BJ (cell line): ENCODE measurements at regions of chr7 and their contacts with region 1.

Region 1: DNA sequence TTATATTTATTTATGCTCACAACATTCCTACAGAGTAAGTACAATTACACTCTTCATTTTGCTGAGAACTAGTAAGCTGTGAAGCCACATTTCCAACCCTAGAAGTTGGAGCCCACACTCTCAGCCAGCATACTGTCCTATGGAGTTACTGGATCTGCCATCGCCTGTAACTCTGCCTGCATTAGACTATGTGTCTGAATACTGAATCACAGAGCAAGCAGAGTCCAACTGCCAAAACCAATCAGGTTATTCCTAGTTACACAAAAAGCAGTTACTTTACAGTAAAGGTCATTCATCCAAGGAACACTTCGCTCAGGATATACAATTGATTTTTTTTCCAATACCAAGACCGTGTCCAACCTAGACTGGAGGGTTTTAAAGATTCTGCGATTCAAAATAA is 21.5 kb downstream of the CTAGE6 start:
- DNase-seq: no peak
- H3K4me3 ChIP-seq: no peak overlapping the region
- H3K27me3 ChIP-seq: no peaks in the 10 kb centered on the region
- CTCF ChIP-seq: no peak

Region 2: DNA sequence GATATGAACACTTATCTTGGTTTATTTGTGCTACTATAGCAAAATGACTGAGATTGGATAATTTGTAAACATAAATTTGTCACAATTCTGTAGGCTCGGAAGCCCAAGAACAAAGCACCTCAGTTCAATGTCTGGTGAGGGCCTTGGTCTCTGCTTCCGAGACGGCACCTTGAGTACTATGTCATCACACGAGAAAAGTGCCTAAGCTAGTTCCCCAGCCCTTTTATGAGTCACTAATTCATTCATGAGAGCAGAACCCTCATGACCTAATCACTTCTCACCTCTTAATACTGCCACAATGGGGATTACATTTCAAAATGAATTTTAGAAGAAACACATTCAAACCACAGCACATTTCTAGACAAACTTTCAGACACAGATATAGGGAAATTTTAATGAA is 1038.7 kb before region 1 on chr7:
- CTCF ChIA-PET with region 1: no interaction called
- POLR2A ChIA-PET with region 1: no interaction called
- DNase-seq: no peak
- H3K4me3 ChIP-seq: no peak overlapping the region
- H3K27me3 ChIP-seq: no peaks in the 10 kb centered on the region
- CTCF ChIP-seq: no peak

Region 3: DNA sequence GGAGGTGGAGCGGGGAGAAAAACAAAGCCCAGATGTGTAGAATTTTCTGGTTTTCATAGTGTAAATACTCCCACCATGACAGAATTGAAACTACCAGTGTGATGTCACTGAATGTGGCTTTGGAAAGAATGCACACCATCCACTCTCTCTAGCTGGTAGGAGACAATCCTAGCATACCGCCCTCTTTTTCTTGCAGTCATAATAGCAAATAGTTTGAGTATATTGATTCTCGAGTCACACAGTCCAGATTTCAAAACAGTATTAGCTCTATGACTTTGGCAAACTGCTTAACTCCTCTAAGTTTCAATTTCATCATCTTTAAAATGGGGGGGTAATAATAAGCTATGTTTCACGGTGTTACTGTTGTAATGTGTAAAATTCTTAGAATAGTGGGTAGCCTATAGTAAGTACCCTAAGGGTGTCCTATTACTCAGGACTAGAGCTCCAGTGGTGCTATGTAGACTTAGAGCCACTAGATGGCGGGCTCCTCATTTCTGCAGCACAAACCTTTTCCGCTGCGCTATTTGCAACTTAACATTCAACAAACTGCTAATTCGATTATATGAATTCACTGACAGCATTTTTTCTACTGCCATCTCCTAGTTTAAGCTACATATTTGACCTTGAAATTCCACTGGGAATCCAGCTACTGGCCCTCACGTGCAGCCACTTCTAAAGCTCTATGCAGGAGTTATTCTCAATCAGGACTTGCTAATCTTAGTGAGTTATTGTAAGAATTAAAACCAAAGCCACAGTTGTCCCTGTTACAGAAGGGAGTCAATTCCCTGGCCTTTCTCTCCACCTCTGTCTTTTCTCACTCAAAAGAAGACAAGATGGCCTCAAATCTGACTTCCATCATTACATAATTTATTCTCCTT is 495.4 kb before region 1 on chr7:
- CTCF ChIA-PET with region 1: no interaction called
- POLR2A ChIA-PET with region 1: no interaction called
- DNase-seq: peak; percentile 78
- H3K4me3 ChIP-seq: no peak overlapping the region
- H3K27me3 ChIP-seq: peaks cover 6% of the 10 kb centered on the region
- CTCF ChIP-seq: peak; percentile 88

Region 4: DNA sequence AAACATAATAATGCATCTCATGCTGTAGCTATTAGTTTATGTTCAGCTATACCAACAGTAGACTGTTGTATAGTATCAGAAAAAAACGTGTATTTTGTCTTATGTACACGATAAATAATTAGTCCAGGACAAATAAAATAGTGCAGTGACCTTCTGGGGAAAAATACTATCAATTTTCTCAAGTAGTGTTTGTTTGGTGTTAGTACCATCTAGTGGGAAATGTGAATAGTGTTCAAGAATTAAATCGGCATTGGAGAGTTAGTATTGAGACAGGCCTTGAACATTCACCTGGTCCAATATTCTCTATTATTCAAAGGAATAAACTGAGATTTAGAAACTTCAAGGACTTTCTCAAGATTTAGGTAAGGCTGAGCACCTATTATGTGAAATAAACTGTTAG is 291.1 kb after region 1 on chr7:
- CTCF ChIA-PET with region 1: interaction called, 10 read pairs
- POLR2A ChIA-PET with region 1: no interaction called
- DNase-seq: no peak
- H3K4me3 ChIP-seq: no peak overlapping the region
- H3K27me3 ChIP-seq: no peaks in the 10 kb centered on the region; the same call in 1 of the 2 replicates
- CTCF ChIP-seq: peak; percentile 36

Region 5: GRCh38 chr7:144127703-144128334 is 391.9 kb after region 1 on chr7:
- CTCF ChIA-PET with region 1: interaction called, 12 read pairs
- POLR2A ChIA-PET with region 1: no interaction called
- DNase-seq: peak; percentile 9
- H3K4me3 ChIP-seq: no peak overlapping the region
- H3K27me3 ChIP-seq: no peaks in the 10 kb centered on the region
- CTCF ChIP-seq: peak; percentile 90